Right lobe of liver (tissue), 6 donors: ENCODE measurements at regions of chr7 and their contacts with region 1.

Region 1: DNA sequence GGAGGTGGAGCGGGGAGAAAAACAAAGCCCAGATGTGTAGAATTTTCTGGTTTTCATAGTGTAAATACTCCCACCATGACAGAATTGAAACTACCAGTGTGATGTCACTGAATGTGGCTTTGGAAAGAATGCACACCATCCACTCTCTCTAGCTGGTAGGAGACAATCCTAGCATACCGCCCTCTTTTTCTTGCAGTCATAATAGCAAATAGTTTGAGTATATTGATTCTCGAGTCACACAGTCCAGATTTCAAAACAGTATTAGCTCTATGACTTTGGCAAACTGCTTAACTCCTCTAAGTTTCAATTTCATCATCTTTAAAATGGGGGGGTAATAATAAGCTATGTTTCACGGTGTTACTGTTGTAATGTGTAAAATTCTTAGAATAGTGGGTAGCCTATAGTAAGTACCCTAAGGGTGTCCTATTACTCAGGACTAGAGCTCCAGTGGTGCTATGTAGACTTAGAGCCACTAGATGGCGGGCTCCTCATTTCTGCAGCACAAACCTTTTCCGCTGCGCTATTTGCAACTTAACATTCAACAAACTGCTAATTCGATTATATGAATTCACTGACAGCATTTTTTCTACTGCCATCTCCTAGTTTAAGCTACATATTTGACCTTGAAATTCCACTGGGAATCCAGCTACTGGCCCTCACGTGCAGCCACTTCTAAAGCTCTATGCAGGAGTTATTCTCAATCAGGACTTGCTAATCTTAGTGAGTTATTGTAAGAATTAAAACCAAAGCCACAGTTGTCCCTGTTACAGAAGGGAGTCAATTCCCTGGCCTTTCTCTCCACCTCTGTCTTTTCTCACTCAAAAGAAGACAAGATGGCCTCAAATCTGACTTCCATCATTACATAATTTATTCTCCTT is 18.7 kb downstream of the TAS2R40 start:
- DNase-seq: peak; percentile 43 to 77 (median 65)
- ATAC-seq: peak; percentile 91 to 96 (median 94)
- H3K4me3 ChIP-seq: peak overlapping the region in 1 of 3 donors; percentile 30
- H3K27ac ChIP-seq: peak overlapping the region; percentile 9 to 79 (median 37)
- H3K4me1 ChIP-seq: peaks cover 0 to 35% (median 0%) of the 10 kb centered on the region in 4 donors
- H3K27me3 ChIP-seq: no peaks in the 10 kb centered on the region
- CTCF ChIP-seq: peak; percentile 93 to 98 (median 96)
- POLR2A ChIP-seq: no peak

Region 2: GRCh38 chr7:143299840-143300239 is 59.3 kb after region 1 on chr7:
- intact Hi-C with region 1: loop called (anchors 5 to 10 kb)
- DNase-seq: peak; percentile 57 to 71 (median 64)
- ATAC-seq: peak; percentile 95 to 96 (median 96)
- H3K4me3 ChIP-seq: no peak overlapping the region
- H3K27ac ChIP-seq: no peak overlapping the region
- H3K4me1 ChIP-seq: no peaks in the 10 kb centered on the region
- H3K27me3 ChIP-seq: no peaks in the 10 kb centered on the region
- CTCF ChIP-seq: peak; percentile 41 to 70 (median 62)
- POLR2A ChIP-seq: no peak

Region 3: GRCh38 chr7:143305423-143306070 is 65.0 kb after region 1 on chr7:
- intact Hi-C with region 1: loop called in 1 of 2 experiments (anchors 5 kb)
- DNase-seq: peak; percentile 87 to 89 (median 89)
- ATAC-seq: peak; percentile 98 to 99 (median 99)
- H3K4me3 ChIP-seq: no peak overlapping the region
- H3K27ac ChIP-seq: no peak overlapping the region
- H3K4me1 ChIP-seq: peaks cover 0 to 10% (median 2%) of the 10 kb centered on the region in 4 donors
- H3K27me3 ChIP-seq: no peaks in the 10 kb centered on the region
- CTCF ChIP-seq: peak; percentile 86 to 94 (median 90)
- POLR2A ChIP-seq: no peak

Region 4: DNA sequence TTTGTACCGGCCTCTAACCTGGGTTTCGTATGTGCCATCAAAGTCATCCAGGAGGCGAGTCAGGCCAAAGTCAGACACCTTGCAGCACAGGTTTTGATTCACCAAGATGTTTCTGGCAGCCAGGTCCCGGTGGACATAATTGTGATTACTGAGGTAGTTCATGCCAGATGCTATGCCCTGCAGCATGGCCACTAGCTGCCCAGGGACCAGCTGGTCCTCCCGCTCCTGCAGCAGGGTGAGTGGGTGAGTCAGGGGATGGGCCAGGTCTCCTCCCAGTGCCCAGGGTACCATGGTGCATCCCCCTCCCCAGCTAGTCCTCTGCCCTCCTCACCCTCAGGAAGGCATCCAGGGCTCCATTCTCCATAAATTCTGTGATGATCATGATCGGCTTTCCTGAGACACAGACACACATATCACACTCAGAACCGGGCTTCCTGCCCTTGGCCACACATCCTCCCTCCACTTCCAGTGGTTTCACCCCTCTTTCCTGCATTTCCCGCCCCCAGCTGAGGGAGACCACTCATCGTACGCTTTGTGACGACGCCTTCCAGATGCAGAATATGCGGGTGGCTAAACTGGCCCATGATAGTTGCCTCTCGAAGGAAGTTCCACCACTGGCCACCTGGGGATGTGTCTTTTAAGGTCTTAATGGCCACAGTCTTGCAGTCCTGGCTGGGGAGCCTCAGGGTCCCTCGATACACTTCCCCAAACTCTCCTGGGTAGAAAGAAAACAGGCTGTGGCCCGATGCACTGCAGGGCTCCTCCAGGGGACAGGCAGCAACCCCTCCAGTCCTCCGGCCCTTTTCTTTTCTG is 154.5 kb after region 1 on chr7:
- intact Hi-C with region 1: no loop called
- DNase-seq: no peak
- ATAC-seq: no peak
- H3K4me3 ChIP-seq: peak overlapping the region in 1 of 3 donors; percentile 17
- H3K27ac ChIP-seq: peak overlapping the region in 1 of 3 donors; percentile 65
- H3K4me1 ChIP-seq: peaks cover 0 to 66% (median 36%) of the 10 kb centered on the region in 4 donors
- H3K27me3 ChIP-seq: no peaks in the 10 kb centered on the region
- CTCF ChIP-seq: peak in 1 of 4 donors; percentile 20
- POLR2A ChIP-seq: no peak